MCF 10A (cell line): ENCODE measurements at regions of chr3 and their contacts with region 1.

Region 1: GRCh38 chr3:13648060-13649001 is 99.4 kb downstream of the FBLN2 start:
- DNase-seq: peak; percentile 79
- H3K4me3 Mint-ChIP-seq: no peak overlapping the region
- H3K27ac Mint-ChIP-seq: no peak overlapping the region
- H3K4me1 Mint-ChIP-seq: peaks cover 27% of the 10 kb centered on the region
- H3K27me3 Mint-ChIP-seq: no peaks in the 10 kb centered on the region
- CTCF ChIP-seq: peak; percentile 95

Region 2: DNA sequence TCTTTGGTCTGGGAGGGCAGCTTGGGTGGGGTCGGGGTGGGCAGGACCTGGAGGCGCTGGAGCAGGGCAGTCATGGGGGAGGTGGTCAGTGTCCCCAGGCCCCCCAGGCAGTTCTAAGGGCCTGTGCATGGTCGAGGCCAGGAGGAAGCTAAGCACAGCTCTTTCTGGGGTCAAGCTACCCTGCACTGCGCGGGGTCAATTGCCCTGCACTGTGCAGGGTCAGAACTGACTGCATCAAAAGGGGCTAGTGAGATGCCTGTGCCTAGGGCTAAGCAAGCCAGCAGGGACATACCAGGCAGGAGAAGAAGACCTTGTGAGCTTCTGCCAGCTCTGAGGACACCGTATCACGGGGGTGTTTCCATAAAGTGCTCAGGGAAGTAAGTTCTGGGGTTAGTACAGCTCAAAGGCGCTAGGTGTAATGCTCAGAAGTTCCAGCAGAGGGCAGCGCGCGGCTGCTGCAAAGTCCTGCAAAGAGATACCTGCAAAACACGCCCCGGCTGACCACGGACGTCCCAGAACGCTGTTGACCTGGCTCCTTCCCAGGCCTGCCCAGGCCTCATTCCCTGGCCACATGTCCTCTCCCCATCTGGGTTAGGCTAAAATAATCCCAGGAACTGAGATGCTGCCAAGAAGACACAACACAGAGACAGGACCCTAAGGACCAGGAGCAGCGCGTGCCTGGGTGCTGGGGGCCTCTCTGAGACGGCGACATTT is 556.3 kb before region 1 on chr3:
- CTCF ChIA-PET with region 1: interaction called, 87 read pairs
- POLR2A ChIA-PET with region 1: no interaction called
- intact Hi-C with region 1: loop called (anchors 1 kb)
- DNase-seq: peak; percentile 63
- H3K4me3 Mint-ChIP-seq: no peak overlapping the region
- H3K27ac Mint-ChIP-seq: no peak overlapping the region
- H3K4me1 Mint-ChIP-seq: peaks cover 7% of the 10 kb centered on the region
- H3K27me3 Mint-ChIP-seq: no peaks in the 10 kb centered on the region
- CTCF ChIP-seq: peak; percentile 97

Region 3: DNA sequence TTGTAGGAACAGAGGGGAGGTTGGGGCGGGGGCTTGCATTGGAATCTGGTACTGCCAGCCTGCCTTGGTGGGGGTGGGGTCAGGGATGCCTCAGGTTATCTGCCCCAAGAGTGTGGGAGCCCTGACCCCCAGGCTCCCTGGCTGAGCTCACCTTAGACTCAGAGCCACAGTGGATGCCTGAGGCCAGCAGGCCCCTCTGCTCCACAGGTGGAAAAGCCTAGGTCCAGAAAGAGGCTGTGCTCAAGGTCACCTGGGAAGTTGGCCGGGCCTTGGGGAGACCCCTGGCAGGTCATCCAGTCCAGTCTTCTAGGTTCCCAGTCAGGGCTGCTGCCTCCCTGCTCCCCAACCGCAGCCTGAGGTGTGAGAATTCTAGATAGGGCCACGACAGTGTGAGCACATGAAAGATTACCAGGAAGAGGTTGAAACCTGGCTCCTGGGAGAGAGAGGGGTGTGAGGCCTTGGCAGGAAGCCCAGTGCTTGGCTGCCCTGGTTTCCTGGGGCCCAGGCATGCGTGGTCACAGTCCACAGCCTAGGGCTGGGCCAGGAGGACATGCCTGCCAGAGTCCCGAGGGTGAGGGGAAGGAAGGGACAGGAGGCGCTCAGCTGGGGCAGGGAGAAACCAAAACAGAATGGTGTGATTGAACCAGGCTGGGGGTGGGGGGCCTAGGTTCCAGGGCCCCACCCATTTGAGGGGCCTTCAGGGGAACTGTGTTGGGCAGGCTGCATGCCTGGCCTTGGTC is 163.3 kb before region 1 on chr3:
- CTCF ChIA-PET with region 1: interaction called, 27 read pairs
- POLR2A ChIA-PET with region 1: interaction called, 4 read pairs
- intact Hi-C with region 1: no loop called
- DNase-seq: peak; percentile 94
- H3K4me3 Mint-ChIP-seq: peak overlapping the region; percentile 28
- H3K27ac Mint-ChIP-seq: peak overlapping the region; percentile 92
- H3K4me1 Mint-ChIP-seq: peaks cover 18% of the 10 kb centered on the region
- H3K27me3 Mint-ChIP-seq: no peaks in the 10 kb centered on the region
- CTCF ChIP-seq: no peak

Region 4: GRCh38 chr3:13507769-13508339 is 140.5 kb before region 1 on chr3:
- CTCF ChIA-PET with region 1: interaction called, 15 read pairs
- POLR2A ChIA-PET with region 1: interaction called, 3 read pairs
- intact Hi-C with region 1: no loop called
- DNase-seq: peak; percentile 46
- H3K4me3 Mint-ChIP-seq: no peak overlapping the region
- H3K27ac Mint-ChIP-seq: peak overlapping the region; percentile 81
- H3K4me1 Mint-ChIP-seq: peaks cover 33% of the 10 kb centered on the region
- H3K27me3 Mint-ChIP-seq: no peaks in the 10 kb centered on the region
- CTCF ChIP-seq: no peak

Region 5: GRCh38 chr3:13600941-13601576 is 47.3 kb before region 1 on chr3:
- CTCF ChIA-PET with region 1: interaction called, 4 read pairs
- POLR2A ChIA-PET with region 1: no interaction called
- intact Hi-C with region 1: loop called (anchors 1 kb)
- DNase-seq: peak; percentile 66
- H3K4me3 Mint-ChIP-seq: no peak overlapping the region
- H3K27ac Mint-ChIP-seq: peak overlapping the region; percentile 95
- H3K4me1 Mint-ChIP-seq: peaks cover 36% of the 10 kb centered on the region
- H3K27me3 Mint-ChIP-seq: no peaks in the 10 kb centered on the region
- CTCF ChIP-seq: no peak